WTC11 (cell line): ENCODE measurements at regions of chr6 and their contacts with region 1.

Region 1: DNA sequence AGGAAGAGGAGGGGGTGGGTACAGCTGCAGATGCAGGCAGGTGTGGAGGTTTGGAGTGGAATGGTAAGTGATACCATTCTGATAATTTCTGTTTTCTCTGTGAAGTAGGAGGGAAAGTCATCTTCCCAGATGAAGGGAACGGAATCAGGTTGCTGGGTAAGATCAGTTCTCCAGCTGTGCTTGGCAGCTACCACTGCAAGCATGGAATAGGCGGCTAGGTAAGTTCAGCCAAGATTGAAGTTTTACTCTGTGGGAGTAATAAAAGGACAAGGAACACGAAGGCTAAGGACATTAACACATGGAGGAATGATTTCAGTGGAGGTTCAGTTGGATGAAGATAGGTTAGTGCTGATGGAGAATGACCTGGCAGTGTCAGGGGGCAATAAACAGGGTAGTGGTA is 128.3 kb downstream of the CARMIL1 start:
- DNase-seq: no peak
- ATAC-seq: peak; percentile 36
- H3K4me3 Mint-ChIP-seq: no peak overlapping the region
- H3K27ac Mint-ChIP-seq: no peak overlapping the region
- H3K4me1 Mint-ChIP-seq: peaks cover 28% of the 10 kb centered on the region
- H3K27me3 Mint-ChIP-seq: no peaks in the 10 kb centered on the region
- CTCF ChIP-seq: no peak

Region 2: GRCh38 chr6:25366903-25367545 is 40.4 kb before region 1 on chr6:
- CTCF ChIA-PET with region 1: interaction called, 3 read pairs
- POLR2A ChIA-PET with region 1: interaction called, 10 read pairs
- DNase-seq: no peak
- ATAC-seq: peak; percentile 11; the same call in 1 of the 2 replicates
- H3K4me3 Mint-ChIP-seq: no peak overlapping the region
- H3K27ac Mint-ChIP-seq: peak overlapping the region; percentile 25
- H3K4me1 Mint-ChIP-seq: peaks cover 68% of the 10 kb centered on the region
- H3K27me3 Mint-ChIP-seq: no peaks in the 10 kb centered on the region
- CTCF ChIP-seq: no peak